Activated naive CD4-positive, alpha-beta T cell treated with anti-CD3 and anti-CD28 coated beads, Interleukin-2, amount 10 ng/mL, durations not matched to agents 7 days and 5 days (primary cell): ENCODE measurements at regions of chr6 and their contacts with region 1.

Region 1: GRCh38 chr6:69796642-69797390 is at the start of gene LMBRD1:
- DNase-seq: peak; percentile 99
- H3K4me3 Mint-ChIP-seq: peak within 1 kb of the TSS; percentile 90
- H3K27ac Mint-ChIP-seq: peak within 1 kb of the TSS; percentile 95
- H3K4me1 Mint-ChIP-seq: peaks cover 41% of the 10 kb centered on the region
- H3K27me3 Mint-ChIP-seq: no peaks in the 10 kb centered on the region

Region 2: GRCh38 chr6:69570106-69570505 is 226.7 kb before region 1 on chr6:
- CTCF ChIA-PET with region 1: no interaction called
- DNase-seq: no peak
- H3K4me3 Mint-ChIP-seq: no peak overlapping the region
- H3K27ac Mint-ChIP-seq: no peak overlapping the region
- H3K4me1 Mint-ChIP-seq: no peaks in the 10 kb centered on the region
- H3K27me3 Mint-ChIP-seq: no peaks in the 10 kb centered on the region

Region 3: GRCh38 chr6:69813508-69813907 is 16.7 kb after region 1 on chr6:
- CTCF ChIA-PET with region 1: interaction called, 45 read pairs
- DNase-seq: no peak
- H3K4me3 Mint-ChIP-seq: peak overlapping the region; percentile 4
- H3K27ac Mint-ChIP-seq: peak overlapping the region; percentile 87
- H3K4me1 Mint-ChIP-seq: peaks cover 65% of the 10 kb centered on the region
- H3K27me3 Mint-ChIP-seq: peaks cover 1% of the 10 kb centered on the region

Region 4: GRCh38 chr6:69907981-69908498 is 111.2 kb after region 1 on chr6:
- CTCF ChIA-PET with region 1: no interaction called
- DNase-seq: no peak
- H3K4me3 Mint-ChIP-seq: no peak overlapping the region
- H3K27ac Mint-ChIP-seq: no peak overlapping the region
- H3K4me1 Mint-ChIP-seq: no peaks in the 10 kb centered on the region
- H3K27me3 Mint-ChIP-seq: no peaks in the 10 kb centered on the region